ENCODE measurements at regions of chr16 and their contacts with region 1.

Region 1: DNA sequence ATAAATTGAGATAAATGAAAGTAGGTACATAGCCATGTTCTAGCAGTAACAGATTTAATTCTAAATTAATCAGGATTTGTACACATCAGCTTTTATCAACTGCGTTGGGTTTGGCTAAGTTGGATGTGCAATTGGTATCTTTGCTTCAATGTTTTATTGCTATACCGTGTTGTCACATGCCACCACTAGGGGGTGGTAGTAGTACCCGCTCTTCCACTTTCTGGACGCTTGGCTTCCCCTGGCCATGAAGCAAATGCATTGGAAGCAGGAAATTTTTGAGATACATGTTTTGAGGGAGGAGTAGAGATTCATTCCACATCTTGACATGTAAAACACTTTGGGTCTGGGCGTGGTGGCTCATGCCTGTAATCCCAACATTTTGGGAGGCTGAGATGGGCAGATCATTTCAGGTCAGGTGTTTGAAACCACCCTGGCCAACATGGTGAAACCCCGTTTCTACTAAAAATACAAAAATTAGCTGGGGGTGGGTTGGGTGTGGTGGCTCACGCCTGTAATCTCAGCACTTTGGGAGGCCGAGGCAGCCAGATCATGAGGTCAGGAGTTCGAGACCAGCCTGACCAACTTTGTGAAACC is 58.6 kb downstream of the EMP2 start:
- DNase-seq: peak; percentile 45
- H3K4me3 ChIP-seq: no peak overlapping the region
- H3K27ac ChIP-seq: no peak overlapping the region
- H3K4me1 ChIP-seq: no peaks in the 10 kb centered on the region
- H3K27me3 ChIP-seq: no peaks in the 10 kb centered on the region
- CTCF ChIP-seq: peak; percentile 92 to 95

Region 2: DNA sequence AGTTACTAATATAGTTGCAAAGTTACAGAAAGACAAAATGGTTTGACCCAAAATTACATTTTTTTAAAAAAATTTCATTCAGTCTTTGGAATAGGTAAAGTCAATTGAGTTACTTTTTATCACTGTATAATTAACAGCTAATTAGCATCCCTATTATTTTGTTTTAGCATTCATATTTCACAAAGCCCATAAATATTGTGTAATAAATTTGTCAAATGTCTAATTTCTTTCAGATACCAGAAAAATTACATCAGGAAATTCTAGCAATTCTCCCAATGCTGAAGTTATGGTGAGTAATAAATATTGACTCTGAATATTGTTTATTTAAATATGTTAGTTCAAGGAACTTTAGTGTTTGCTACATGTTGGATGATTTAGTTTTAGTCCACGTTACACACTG is 48.5 kb before region 1 on chr16:
- CTCF ChIA-PET with region 1: no interaction called
- dilution Hi-C with region 1: no loop called
- in situ Hi-C with region 1: no loop called
- intact Hi-C with region 1: no loop called
- DNase-seq: no peak
- H3K4me3 ChIP-seq: no peak overlapping the region
- H3K27ac ChIP-seq: no peak overlapping the region
- H3K4me1 ChIP-seq: no peaks in the 10 kb centered on the region
- H3K27me3 ChIP-seq: no peaks in the 10 kb centered on the region
- CTCF ChIP-seq: no peak

Region 3: GRCh38 chr16:10652730-10653590 is 131.2 kb after region 1 on chr16:
- CTCF ChIA-PET with region 1: no interaction called
- dilution Hi-C with region 1: no loop called
- in situ Hi-C with region 1: no loop called
- intact Hi-C with region 1: loop called (anchors 5 kb)
- DNase-seq: peak; percentile 89
- H3K4me3 ChIP-seq: peak overlapping the region; percentile 6 to 41 (median 30)
- H3K27ac ChIP-seq: peak overlapping the region; percentile 65
- H3K4me1 ChIP-seq: peaks cover 16% of the 10 kb centered on the region
- H3K27me3 ChIP-seq: no peaks in the 10 kb centered on the region
- CTCF ChIP-seq: no peak

Region 4: DNA sequence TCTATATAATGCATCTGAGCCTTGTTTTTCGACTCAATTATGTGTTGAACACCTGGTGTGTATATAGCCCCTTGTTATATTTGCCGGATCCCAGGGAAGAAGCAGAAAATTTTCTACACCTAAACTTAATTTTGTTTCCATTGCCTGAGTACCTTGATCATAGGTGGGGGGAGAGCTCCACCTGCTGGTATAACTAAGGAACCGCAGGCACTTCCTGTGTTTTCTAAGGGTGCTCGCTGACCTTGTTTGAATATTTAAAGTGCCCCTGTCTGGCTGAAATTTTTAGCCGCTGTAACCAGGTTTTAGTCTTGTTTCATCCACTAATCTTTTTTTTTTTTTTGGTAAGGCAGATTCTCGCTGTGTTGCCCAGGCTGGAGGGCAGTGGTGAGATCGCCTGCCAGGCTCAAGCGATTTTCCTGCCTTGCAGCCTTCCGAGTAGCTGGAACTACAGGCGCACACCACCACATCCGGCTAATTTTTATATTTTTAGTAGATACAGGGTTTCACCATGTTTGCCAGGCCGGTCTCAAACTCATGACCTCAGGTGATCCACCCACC is 215.4 kb after region 1 on chr16:
- CTCF ChIA-PET with region 1: no interaction called
- dilution Hi-C with region 1: no loop called
- in situ Hi-C with region 1: loop called in 1 of 2 experiments (anchors 5 kb)
- intact Hi-C with region 1: loop called (anchors 1 kb)
- DNase-seq: peak; percentile 50
- H3K4me3 ChIP-seq: no peak overlapping the region
- H3K27ac ChIP-seq: no peak overlapping the region
- H3K4me1 ChIP-seq: peaks cover 8% of the 10 kb centered on the region
- H3K27me3 ChIP-seq: no peaks in the 10 kb centered on the region
- CTCF ChIP-seq: peak; percentile 85 to 90

Region 5: GRCh38 chr16:10918294-10919002 is 396.7 kb after region 1 on chr16:
- CTCF ChIA-PET with region 1: no interaction called
- dilution Hi-C with region 1: no loop called
- in situ Hi-C with region 1: loop called (anchors 10 kb)
- intact Hi-C with region 1: no loop called
- DNase-seq: peak; percentile 77
- H3K4me3 ChIP-seq: no peak overlapping the region
- H3K27ac ChIP-seq: no peak overlapping the region
- H3K4me1 ChIP-seq: peaks cover 7% of the 10 kb centered on the region
- H3K27me3 ChIP-seq: no peaks in the 10 kb centered on the region
- CTCF ChIP-seq: peak; percentile 98 to 99

Region 6: DNA sequence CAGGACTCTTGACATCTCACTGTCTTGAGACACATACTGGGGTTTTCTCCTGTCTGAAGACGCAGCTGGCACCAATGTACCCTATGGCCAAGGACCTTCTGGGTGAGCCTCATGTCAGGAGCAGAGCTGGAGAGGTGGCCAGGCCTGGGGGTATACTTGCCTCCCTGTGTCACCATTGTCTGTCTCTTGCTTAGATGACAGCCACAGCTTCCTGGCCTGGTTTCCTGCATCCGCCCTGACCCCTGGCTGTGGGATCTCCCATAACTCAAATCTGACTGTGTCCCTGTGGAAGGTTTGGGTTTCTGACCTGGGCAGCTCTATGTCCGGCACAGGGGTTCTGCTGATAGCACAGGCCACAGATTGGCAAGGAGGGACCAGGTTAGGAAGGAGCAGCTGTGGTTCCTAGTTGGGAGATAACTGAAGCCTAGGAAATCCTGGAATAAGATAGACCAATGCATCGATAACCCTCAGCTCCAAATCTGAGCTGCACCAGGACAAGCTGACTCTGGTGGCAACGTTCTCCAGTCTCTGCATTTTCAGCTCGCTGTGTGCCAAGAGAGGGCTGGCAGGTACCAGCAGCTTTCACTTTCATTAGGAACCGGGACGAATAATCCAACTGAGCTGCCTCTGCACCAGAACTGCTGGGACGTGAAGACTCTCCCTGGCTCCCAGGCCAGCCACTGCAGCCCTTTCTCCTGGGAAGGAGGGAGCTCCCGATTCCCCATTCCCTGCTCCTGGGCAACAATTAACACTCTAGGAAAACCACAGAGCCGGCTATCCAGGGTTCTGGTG is 415.5 kb after region 1 on chr16:
- CTCF ChIA-PET with region 1: no interaction called
- dilution Hi-C with region 1: no loop called
- in situ Hi-C with region 1: loop called in 1 of 2 experiments (anchors 10 kb)
- intact Hi-C with region 1: no loop called
- DNase-seq: no peak
- H3K4me3 ChIP-seq: no peak overlapping the region
- H3K27ac ChIP-seq: no peak overlapping the region
- H3K4me1 ChIP-seq: peaks cover 27% of the 10 kb centered on the region
- H3K27me3 ChIP-seq: no peaks in the 10 kb centered on the region
- CTCF ChIP-seq: no peak

Measured in mammary epithelial cell (primary cell).